ENCODE measurements at regions of chr12 and their contacts with region 1.

Region 1: GRCh38 chr12:132285991-132286681 is 43.3 kb downstream of the GALNT9 start:
- DNase-seq: peak; percentile 83
- H3K4me3 Mint-ChIP-seq: peak overlapping the region; percentile 42
- H3K27ac Mint-ChIP-seq: peak overlapping the region; percentile 42
- H3K4me1 Mint-ChIP-seq: peaks cover 31% of the 10 kb centered on the region
- H3K27me3 Mint-ChIP-seq: no peaks in the 10 kb centered on the region
- CTCF ChIP-seq: no peak

Region 2: DNA sequence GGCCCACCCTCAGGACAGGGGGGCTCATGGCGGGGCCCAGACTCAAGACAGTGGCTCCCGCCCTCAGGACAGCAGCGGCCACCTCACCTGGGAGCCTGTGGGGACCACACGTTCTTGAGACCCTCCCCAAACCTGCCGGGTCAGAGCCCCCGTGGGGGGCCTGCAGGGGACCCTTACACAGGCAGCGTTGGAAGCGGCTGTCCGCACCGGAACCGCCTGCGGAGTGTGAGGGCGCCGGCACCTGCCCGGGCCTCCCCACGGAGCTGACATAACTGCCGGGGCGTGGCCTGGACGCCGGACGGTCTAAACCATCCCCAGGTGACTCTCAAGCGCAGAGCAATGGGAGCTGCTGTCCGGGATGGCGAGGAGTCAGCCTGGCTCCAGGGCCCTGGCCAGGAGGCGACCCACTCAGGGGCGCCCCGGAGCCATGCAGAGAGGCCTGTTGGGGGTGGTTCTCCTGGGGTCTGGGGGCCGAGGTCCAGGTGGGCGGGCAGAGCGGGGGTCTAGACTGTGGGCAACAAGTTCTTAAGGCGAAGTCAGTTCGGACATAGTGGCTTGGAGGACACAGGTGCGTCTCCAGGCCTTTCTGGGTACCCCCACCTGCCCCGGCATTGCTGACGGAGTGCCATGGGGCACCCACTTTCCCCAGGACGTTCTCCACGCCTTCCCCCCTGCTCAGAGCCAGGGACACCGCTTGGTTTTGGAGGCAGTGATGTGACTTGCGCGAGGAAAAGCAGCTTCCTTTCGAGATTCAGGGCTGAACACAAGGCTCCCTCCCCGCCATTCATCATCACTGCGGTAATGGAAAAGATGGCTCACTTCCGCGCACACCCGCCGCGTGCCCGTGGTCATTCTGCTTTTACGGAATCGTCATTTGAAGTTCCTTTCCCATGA is 20.1 kb after region 1 on chr12:
- CTCF ChIA-PET with region 1: no interaction called
- POLR2A ChIA-PET with region 1: no interaction called
- intact Hi-C with region 1: no loop called
- DNase-seq: no peak
- H3K4me3 Mint-ChIP-seq: no peak overlapping the region
- H3K27ac Mint-ChIP-seq: no peak overlapping the region
- H3K4me1 Mint-ChIP-seq: no peaks in the 10 kb centered on the region
- H3K27me3 Mint-ChIP-seq: peaks cover 28% of the 10 kb centered on the region
- CTCF ChIP-seq: no peak

Region 3: GRCh38 chr12:132327351-132328171 is 41.4 kb after region 1 on chr12:
- CTCF ChIA-PET with region 1: interaction called, 4 read pairs
- POLR2A ChIA-PET with region 1: interaction called, 20 read pairs
- intact Hi-C with region 1: loop called (anchors 1 kb)
- DNase-seq: peak; percentile 95
- H3K4me3 Mint-ChIP-seq: peak overlapping the region; percentile 59
- H3K27ac Mint-ChIP-seq: peak overlapping the region; percentile 92
- H3K4me1 Mint-ChIP-seq: peaks cover 9% of the 10 kb centered on the region
- H3K27me3 Mint-ChIP-seq: peaks cover 30% of the 10 kb centered on the region
- CTCF ChIP-seq: no peak

Region 4: GRCh38 chr12:132356691-132357622 is 70.8 kb after region 1 on chr12:
- CTCF ChIA-PET with region 1: interaction called, 3 read pairs
- POLR2A ChIA-PET with region 1: no interaction called
- intact Hi-C with region 1: loop called (anchors 10 kb)
- DNase-seq: peak; percentile 79
- H3K4me3 Mint-ChIP-seq: no peak overlapping the region
- H3K27ac Mint-ChIP-seq: no peak overlapping the region
- H3K4me1 Mint-ChIP-seq: peaks cover 5% of the 10 kb centered on the region
- H3K27me3 Mint-ChIP-seq: no peaks in the 10 kb centered on the region
- CTCF ChIP-seq: no peak

Measured in MCF 10A (cell line).